CD8-positive, alpha-beta T cell (primary cell): ENCODE measurements at regions of chr2 and their contacts with region 1.

Region 1: DNA sequence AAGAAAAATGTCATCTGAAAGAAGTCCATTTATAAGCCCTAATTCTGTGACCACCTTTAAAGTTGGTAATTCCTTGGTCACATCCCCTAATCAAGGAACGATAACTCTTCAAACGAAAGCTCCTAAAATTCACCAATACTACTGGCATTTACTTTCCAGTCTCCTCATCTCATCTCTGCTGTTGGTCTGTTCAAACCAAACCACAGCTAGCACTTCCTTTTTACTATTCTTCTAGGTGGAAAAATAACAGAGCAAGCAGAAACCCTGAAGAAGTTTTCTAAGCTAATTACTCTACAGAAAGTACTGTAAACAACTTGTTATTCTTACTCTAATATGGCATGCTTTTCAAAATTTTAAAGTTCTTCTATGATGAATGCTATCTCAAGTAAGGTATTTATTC is 21.6 kb downstream of the TIA1 start:
- DNase-seq: no peak
- ATAC-seq: no peak
- H3K4me3 ChIP-seq: no peak overlapping the region
- H3K4me3 Mint-ChIP-seq: no peak overlapping the region
- H3K27ac ChIP-seq: no peak overlapping the region
- H3K27ac Mint-ChIP-seq: peak overlapping the region; percentile 2
- H3K4me1 ChIP-seq: no peaks in the 10 kb centered on the region
- H3K4me1 Mint-ChIP-seq: peaks cover 3% of the 10 kb centered on the region
- H3K27me3 ChIP-seq: no peaks in the 10 kb centered on the region
- H3K27me3 Mint-ChIP-seq: no peaks in the 10 kb centered on the region
- CTCF ChIP-seq: no peak

Region 2: GRCh38 chr2:69525261-69525660 is 701.5 kb before region 1 on chr2:
- CTCF ChIA-PET with region 1: no interaction called
- POLR2A ChIA-PET with region 1: no interaction called
- intact Hi-C with region 1: loop called in 1 of 2 experiments (anchors 10 kb)
- DNase-seq: no peak
- ATAC-seq: no peak
- H3K4me3 ChIP-seq: no peak overlapping the region
- H3K4me3 Mint-ChIP-seq: no peak overlapping the region
- H3K27ac ChIP-seq: no peak overlapping the region
- H3K27ac Mint-ChIP-seq: peak overlapping the region; percentile 11
- H3K4me1 ChIP-seq: no peaks in the 10 kb centered on the region
- H3K4me1 Mint-ChIP-seq: no peaks in the 10 kb centered on the region
- H3K27me3 ChIP-seq: no peaks in the 10 kb centered on the region
- H3K27me3 Mint-ChIP-seq: no peaks in the 10 kb centered on the region
- CTCF ChIP-seq: no peak